ENCODE measurements at regions of chr6 and their contacts with region 1.

Region 1: GRCh38 chr6:30483677-30484279 is 5.5 kb upstream of the HLA-E start:
- DNase-seq: no peak
- H3K4me3 ChIP-seq: no peak overlapping the region
- H3K27me3 ChIP-seq: peaks cover 22% of the 10 kb centered on the region
- CTCF ChIP-seq: peak; percentile 58

Region 2: DNA sequence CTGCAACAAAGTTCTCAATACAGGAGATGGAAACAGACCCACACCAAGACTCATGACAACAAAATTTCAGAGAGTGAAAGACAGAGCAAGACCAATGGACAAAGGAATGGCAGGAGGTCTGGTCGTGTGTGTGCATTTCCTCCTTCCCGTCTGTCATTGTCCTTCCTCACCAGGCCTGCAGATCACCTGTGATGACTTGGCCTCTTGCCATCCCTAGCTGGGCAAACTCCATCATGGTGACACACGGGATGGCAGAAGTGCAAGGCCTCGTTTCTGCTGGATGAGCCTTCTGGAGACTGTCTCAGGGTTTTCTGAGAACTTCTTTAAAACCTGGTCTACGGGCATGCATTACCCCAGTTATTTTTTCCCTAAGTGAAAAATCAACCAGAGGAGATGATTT is 89.6 kb before region 1 on chr6:
- CTCF ChIA-PET with region 1: no interaction called
- POLR2A ChIA-PET with region 1: no interaction called
- DNase-seq: no peak
- H3K4me3 ChIP-seq: no peak overlapping the region
- H3K27me3 ChIP-seq: peaks cover 16% of the 10 kb centered on the region
- CTCF ChIP-seq: no peak

Region 3: GRCh38 chr6:30411515-30412207 is 72.1 kb before region 1 on chr6:
- CTCF ChIA-PET with region 1: no interaction called
- POLR2A ChIA-PET with region 1: no interaction called
- DNase-seq: no peak
- H3K4me3 ChIP-seq: no peak overlapping the region
- H3K27me3 ChIP-seq: peaks cover 2% of the 10 kb centered on the region; the same call in 1 of the 2 replicates
- CTCF ChIP-seq: peak; percentile 85

Region 4: GRCh38 chr6:30463651-30464618 is 19.8 kb before region 1 on chr6:
- CTCF ChIA-PET with region 1: interaction called, 36 read pairs
- POLR2A ChIA-PET with region 1: no interaction called
- DNase-seq: no peak
- H3K4me3 ChIP-seq: no peak overlapping the region
- H3K27me3 ChIP-seq: peaks cover 63% of the 10 kb centered on the region
- CTCF ChIP-seq: no peak

Region 5: GRCh38 chr6:30470968-30471367 is 12.8 kb before region 1 on chr6:
- CTCF ChIA-PET with region 1: interaction called, 36 read pairs
- POLR2A ChIA-PET with region 1: no interaction called
- DNase-seq: no peak
- H3K4me3 ChIP-seq: no peak overlapping the region
- H3K27me3 ChIP-seq: peaks cover 19% of the 10 kb centered on the region
- CTCF ChIP-seq: no peak

Region 6: DNA sequence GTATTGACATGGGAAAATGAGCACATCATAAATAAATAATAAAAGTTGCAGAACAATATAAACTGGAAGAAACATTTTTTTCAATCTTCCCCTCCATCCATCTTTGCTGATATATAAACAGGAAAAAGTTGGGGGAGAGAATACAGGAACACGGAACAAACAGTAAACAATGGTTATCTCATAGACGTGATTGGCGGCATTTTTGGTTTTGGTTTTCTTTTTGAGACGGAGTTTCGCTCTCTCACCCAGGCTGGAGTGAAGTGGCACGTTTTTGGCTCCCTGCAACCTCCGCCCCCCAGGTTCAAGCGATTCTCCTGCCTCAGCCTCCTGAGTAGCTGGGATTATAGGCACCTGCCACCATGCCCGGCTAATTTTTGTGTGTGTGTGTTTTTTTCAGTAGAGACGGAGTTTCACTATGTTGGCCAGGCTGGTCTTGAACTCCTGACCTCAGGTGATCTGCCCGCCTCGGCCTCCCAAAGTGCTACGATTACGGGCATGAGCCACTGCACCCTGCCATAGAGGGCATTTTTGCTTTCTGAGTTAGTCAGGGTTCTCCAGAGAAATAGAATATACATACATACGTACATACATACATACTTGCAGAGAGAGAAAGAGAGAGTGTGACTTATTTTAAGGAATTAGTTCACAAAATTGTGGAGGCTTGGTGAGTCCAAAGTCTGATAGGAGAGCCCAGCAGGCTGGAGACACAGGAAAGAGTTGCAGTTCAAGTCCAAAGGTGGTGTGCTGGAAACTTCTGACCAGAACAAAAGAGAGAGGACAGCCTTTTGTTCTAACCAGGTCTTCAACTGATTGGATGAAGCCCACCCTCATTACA is 49.9 kb after region 1 on chr6:
- CTCF ChIA-PET with region 1: interaction called, 146 read pairs
- POLR2A ChIA-PET with region 1: interaction called, 6 read pairs
- DNase-seq: no peak
- H3K4me3 ChIP-seq: no peak overlapping the region
- H3K27me3 ChIP-seq: no peaks in the 10 kb centered on the region
- CTCF ChIP-seq: no peak

Region 7: DNA sequence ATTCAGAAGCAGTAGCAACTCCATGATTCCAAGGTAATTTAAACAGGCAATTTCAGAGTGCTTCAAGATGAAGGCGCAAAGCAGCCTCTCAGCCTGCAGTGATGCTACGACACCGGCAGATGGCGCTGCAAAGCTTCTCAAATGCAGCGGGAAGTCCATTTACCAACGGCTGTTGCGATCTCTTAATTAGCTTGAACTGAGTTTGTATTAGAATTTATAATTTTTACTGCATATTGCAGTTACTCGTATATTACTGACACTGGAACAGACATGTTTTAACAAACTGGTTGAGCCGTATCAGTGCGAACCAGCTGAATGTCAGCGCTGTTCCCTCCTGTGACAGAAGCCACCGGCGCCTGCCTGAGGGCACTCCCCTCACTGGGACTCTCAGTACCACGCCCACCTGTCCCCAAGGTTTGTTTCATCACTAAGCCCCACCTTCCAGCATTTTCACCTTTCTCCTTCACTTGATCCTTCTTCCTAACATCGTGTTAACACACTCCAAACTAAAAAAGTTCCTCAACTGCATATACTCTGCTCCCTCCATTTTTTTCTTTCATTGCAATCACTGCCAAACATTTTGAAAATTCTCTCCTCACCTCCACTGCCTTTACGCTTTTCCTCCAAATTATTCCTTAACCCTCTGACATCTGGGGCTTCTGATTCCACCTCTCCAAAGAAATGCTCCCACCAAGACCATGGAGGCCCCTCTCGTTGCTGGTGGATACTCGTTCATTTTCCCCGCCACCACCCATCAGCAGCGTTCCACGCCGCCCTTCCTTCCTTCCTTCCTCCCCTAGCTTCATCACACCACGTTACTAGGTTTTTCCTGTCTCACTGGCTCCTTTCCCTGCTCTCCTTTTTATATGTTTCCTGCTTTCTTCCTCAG is 58.0 kb after region 1 on chr6:
- CTCF ChIA-PET with region 1: interaction called, 263 read pairs
- POLR2A ChIA-PET with region 1: no interaction called
- DNase-seq: peak; percentile 31
- H3K4me3 ChIP-seq: no peak overlapping the region
- H3K27me3 ChIP-seq: no peaks in the 10 kb centered on the region
- CTCF ChIP-seq: peak; percentile 99

Region 8: GRCh38 chr6:30600451-30600961 is 116.7 kb after region 1 on chr6:
- CTCF ChIA-PET with region 1: interaction called, 42 read pairs
- POLR2A ChIA-PET with region 1: no interaction called
- DNase-seq: no peak
- H3K4me3 ChIP-seq: no peak overlapping the region
- H3K27me3 ChIP-seq: no peaks in the 10 kb centered on the region
- CTCF ChIP-seq: no peak

Measured in BJ (cell line).